Aorta (tissue), 5 donors: ENCODE measurements at regions of chr1 and their contacts with region 1.

Region 1: DNA sequence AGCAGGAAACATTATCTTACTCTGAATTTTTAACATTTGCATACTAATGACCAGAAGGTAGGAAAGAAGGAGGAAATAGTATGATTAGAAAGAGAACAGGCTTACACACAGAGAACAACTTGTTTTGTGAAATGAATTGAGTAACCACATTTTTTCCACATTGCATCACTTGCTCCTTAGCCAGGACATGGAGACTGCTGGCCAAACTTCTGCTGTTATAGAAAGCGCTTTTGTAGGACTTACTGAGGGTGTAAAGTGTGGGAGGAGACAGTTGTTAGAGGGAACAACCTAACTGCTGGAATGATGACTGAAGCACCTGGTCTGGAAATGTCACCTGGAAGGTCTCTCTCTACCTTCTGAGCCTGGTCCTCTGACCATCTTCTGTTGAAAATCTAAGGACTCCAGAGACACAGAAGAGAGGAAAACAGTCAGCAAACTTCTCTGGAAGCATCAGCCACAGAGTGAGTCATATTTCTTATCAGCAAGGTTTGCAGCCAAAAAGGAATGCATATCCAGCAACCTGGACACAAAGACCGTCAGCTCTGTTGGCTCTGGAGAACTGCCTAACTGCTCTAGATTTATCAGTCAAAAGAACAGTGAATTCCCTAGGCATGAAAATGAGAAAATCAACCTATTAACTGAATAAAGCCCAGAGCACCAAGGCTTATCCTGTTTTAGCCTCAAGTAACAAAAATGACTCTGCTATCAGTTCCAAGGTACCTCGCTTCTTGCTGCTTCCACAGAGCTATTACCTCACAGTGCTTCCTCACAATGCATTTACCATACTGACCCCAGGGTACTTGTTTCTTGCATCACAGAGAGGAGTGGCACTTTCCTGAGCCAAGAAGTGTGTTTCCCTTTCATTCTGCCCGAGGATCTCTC is 88.0 kb upstream of the SLFNL1 start:
- DNase-seq: no peak
- ATAC-seq: peak; percentile 93
- H3K4me3 ChIP-seq: peak overlapping the region in 1 of 2 donors; percentile 76
- H3K27ac ChIP-seq: peak overlapping the region; percentile 99 to 100
- H3K4me1 ChIP-seq: peaks cover 4 to 11% of the 10 kb centered on the region in 2 donors
- H3K27me3 ChIP-seq: no peaks in the 10 kb centered on the region

Region 2: DNA sequence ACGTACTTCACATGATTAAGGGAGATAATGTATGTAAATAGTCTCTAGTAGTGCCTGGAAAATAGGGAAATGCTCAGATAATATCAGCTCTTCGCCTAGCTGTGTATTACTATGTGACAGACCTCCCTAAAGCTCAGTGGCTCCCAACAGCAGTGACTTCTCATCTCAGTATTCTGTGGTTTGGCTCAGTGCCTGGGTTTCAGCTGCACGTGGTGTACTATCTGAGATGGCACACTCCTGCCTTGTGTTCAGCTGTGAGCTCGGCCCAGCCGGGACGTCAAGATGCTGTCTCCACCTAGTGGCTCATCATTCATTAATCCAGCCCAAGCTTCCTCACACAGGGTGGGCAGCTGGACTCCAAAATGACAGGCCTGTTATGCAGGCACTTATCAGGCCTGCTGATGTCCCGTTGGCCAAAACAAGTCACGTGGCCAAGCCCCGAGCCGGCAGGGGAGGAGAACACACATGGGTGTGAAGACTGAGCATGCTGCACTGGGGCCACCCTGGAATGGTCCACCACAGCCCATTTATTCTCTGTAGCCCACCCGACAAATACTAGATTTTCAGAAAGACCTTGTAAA is 105.8 kb before region 1 on chr1:
- intact Hi-C with region 1: no loop called
- DNase-seq: peak; percentile 93 to 95
- ATAC-seq: peak; percentile 93
- H3K4me3 ChIP-seq: no peak overlapping the region
- H3K27ac ChIP-seq: no peak overlapping the region
- H3K4me1 ChIP-seq: no peaks in the 10 kb centered on the region
- H3K27me3 ChIP-seq: no peaks in the 10 kb centered on the region

Region 3: GRCh38 chr1:41241782-41242341 is 132.3 kb after region 1 on chr1 and contains the start of gene SCMH1:
- intact Hi-C with region 1: loop called in 1 of 2 experiments (anchors 2 kb)
- DNase-seq: peak; percentile 61 to 84
- ATAC-seq: peak; percentile 63
- H3K4me3 ChIP-seq: peak within 1 kb of the TSS; percentile 98 to 99
- H3K27ac ChIP-seq: peak within 1 kb of the TSS; percentile 99
- H3K4me1 ChIP-seq: peaks cover 0 to 7% of the 10 kb centered on the region in 2 donors
- H3K27me3 ChIP-seq: no peaks in the 10 kb centered on the region
- total RNA-seq, gene SCMH1: 50.3 to 60.7 TPM